ENCODE measurements at regions of chr12 and their contacts with region 1.

Region 1: GRCh38 chr12:118372541-118373495 is at the start of gene TAOK3:
- DNase-seq: peak; percentile 99
- H3K4me3 ChIP-seq: peak within 1 kb of the TSS; percentile 62 to 93
- H3K27ac ChIP-seq: peak within 1 kb of the TSS; percentile 73 to 80
- H3K4me1 ChIP-seq: no peaks in the 10 kb centered on the region
- H3K27me3 ChIP-seq: no peaks in the 10 kb centered on the region
- CTCF ChIP-seq: peak in 1 of 4 experiments; percentile 23
- POLR2A ChIP-seq: peak; percentile 83
- total RNA-seq, gene TAOK3: 52.2 to 52.5 TPM

Region 2: DNA sequence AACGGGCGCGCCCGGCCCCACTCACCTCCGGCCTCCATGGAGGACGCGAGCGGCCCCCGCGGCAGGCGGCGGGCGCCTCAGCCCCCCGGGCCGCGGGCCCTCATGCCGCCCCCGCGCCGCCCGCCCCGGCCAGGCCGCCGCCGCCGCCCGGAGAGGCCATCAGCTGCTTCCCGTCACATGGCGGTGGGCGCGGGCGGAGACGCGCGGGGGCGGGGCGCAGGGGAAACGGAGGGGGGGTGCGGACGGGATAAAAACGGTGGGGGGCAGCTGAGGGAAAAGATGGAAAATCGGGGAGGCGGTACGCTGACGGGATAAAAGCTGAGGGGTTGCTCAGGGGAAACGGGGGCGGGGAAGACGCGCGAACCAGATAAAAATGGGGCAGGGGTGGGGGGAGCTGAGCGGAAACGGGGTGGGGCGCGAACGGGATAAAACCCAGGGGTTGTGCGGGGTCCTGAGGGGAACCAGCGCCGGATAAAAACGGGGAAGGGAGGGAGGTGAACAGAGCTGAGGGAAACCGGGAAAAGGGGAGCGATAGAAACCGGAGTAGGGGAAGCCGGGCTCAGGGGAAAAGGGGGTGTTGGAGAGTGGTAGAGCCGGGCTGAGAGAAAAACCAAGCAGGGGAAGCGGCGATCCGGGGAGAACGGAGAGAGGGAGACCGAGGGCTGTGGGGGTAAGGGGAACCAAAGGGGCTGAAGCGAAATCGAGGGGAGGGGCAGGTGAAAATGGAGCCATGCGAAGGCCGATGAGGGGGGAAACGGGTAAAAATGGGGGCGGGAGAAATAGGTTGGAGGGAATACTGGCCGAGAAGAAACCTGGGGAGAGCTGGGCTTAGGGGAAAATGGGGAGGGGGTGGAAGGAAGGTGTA is 311.6 kb before region 1 on chr12 and contains the start of gene WSB2:
- intact Hi-C with region 1: loop called (anchors 5 kb)
- DNase-seq: peak; percentile 70
- H3K4me3 ChIP-seq: peak within 1 kb of the TSS; percentile 81 to 89
- H3K27ac ChIP-seq: peak within 1 kb of the TSS; percentile 99
- H3K4me1 ChIP-seq: no peaks in the 10 kb centered on the region
- H3K27me3 ChIP-seq: no peaks in the 10 kb centered on the region
- CTCF ChIP-seq: no peak
- POLR2A ChIP-seq: no peak
- total RNA-seq, gene WSB2: 41.3 to 99.2 TPM

Region 3: GRCh38 chr12:118135788-118136558 is 236.8 kb before region 1 on chr12 and contains the start of gene PEBP1:
- intact Hi-C with region 1: loop called (anchors 5 kb)
- DNase-seq: peak; percentile 96
- H3K4me3 ChIP-seq: peak within 1 kb of the TSS; percentile 63 to 84
- H3K27ac ChIP-seq: peak within 1 kb of the TSS; percentile 84 to 86
- H3K4me1 ChIP-seq: peaks cover 5% of the 10 kb centered on the region
- H3K27me3 ChIP-seq: no peaks in the 10 kb centered on the region
- CTCF ChIP-seq: no peak
- POLR2A ChIP-seq: peak; percentile 94
- total RNA-seq, gene PEBP1: 538 to 621 TPM

Region 4: GRCh38 chr12:118183705-118184104 is 189.1 kb before region 1 on chr12:
- intact Hi-C with region 1: loop called (anchors 2 kb)
- DNase-seq: no peak
- H3K4me3 ChIP-seq: no peak overlapping the region
- H3K27ac ChIP-seq: no peak overlapping the region
- H3K4me1 ChIP-seq: no peaks in the 10 kb centered on the region
- H3K27me3 ChIP-seq: no peaks in the 10 kb centered on the region
- CTCF ChIP-seq: no peak
- POLR2A ChIP-seq: no peak

Measured in prostate gland (tissue), 2 donors.